ENCODE measurements at regions of chr22 and their contacts with region 1.

Region 1: GRCh38 chr22:45553351-45554039 is 50.8 kb downstream of the FBLN1 start:
- DNase-seq: peak; percentile 90
- H3K4me3 Mint-ChIP-seq: peak overlapping the region; percentile 2
- H3K27ac Mint-ChIP-seq: peak overlapping the region; percentile 99
- H3K4me1 Mint-ChIP-seq: peaks cover 37% of the 10 kb centered on the region
- H3K27me3 Mint-ChIP-seq: no peaks in the 10 kb centered on the region
- CTCF ChIP-seq: peak; percentile 96

Region 2: DNA sequence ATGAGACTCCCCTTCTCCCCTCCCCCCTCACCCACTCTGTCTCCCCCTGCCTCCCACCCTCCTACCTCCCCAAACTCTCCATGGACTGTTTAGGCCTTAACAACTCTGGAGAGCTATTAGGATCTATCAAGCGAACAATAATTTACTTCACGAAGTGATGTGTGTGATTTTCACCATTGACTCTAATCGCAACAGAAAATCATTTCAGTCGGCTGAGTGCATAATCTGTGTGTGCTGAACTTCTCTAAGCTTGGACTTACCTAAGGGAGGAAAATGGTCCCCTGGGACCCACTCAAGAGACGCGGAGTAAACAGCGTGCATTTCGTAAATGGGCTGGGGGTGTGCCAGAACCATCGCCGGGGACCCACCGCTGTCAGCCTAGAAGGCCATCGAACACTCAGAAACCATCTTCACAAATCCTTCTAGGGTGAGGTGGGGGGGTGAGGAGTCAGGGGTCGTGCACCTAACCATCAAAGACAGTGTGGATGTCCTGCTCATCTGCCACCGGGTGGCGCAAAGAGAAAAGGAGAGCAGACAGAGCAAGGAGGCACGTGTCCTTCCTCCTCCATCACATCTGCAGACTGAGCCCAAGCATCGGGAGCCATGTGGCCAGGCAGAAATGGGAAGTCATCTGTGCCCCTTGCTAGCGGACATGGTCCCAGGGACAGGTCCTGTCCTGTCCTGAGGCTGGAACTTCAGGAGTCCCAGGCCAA is 451.8 kb before region 1 on chr22:
- CTCF ChIA-PET with region 1: interaction called, 3 read pairs
- POLR2A ChIA-PET with region 1: no interaction called
- intact Hi-C with region 1: loop called (anchors 5 kb)
- DNase-seq: peak; percentile 83
- H3K4me3 Mint-ChIP-seq: no peak overlapping the region
- H3K27ac Mint-ChIP-seq: no peak overlapping the region
- H3K4me1 Mint-ChIP-seq: peaks cover 10% of the 10 kb centered on the region
- H3K27me3 Mint-ChIP-seq: peaks cover 16% of the 10 kb centered on the region
- CTCF ChIP-seq: peak; percentile 51

Region 3: DNA sequence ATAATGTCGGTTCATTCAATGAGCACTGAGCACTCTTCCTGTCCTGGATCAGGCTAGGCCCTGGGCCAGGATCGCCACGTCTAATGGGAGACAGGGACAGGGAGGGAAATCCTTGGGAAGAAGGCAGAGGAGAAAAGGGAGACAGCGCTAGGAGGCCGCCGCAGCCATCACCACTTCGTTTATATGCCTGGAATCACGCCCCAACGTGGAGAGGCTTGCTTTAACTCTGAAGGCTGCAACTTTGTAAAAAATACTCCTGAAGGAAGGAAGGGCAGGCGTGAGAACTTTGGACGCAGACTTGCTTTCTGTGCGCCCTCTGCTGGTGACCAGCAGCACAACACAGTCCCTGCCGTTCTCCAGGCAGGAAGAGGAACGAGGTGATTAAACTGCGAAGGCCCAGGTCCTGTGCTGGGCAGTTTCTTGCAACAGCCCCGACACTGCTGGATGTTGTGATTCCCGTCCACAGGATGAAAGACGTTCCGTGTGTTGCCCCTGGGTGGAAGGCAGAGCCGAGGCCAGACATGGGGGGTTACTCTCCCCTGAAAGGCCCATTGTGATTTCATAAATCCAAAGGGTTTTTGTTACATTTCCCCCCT is 117.9 kb before region 1 on chr22:
- CTCF ChIA-PET with region 1: interaction called, 142 read pairs
- POLR2A ChIA-PET with region 1: interaction called, 20 read pairs
- intact Hi-C with region 1: no loop called
- DNase-seq: peak; percentile 85
- H3K4me3 Mint-ChIP-seq: no peak overlapping the region
- H3K27ac Mint-ChIP-seq: peak overlapping the region; percentile 39
- H3K4me1 Mint-ChIP-seq: peaks cover 11% of the 10 kb centered on the region
- H3K27me3 Mint-ChIP-seq: no peaks in the 10 kb centered on the region
- CTCF ChIP-seq: peak; percentile 92

Region 4: GRCh38 chr22:45448431-45448830 is 105.1 kb before region 1 on chr22:
- CTCF ChIA-PET with region 1: interaction called, 142 read pairs
- POLR2A ChIA-PET with region 1: interaction called, 8 read pairs
- intact Hi-C with region 1: no loop called
- DNase-seq: no peak
- H3K4me3 Mint-ChIP-seq: no peak overlapping the region
- H3K27ac Mint-ChIP-seq: no peak overlapping the region
- H3K4me1 Mint-ChIP-seq: peaks cover 15% of the 10 kb centered on the region
- H3K27me3 Mint-ChIP-seq: no peaks in the 10 kb centered on the region
- CTCF ChIP-seq: no peak

Region 5: DNA sequence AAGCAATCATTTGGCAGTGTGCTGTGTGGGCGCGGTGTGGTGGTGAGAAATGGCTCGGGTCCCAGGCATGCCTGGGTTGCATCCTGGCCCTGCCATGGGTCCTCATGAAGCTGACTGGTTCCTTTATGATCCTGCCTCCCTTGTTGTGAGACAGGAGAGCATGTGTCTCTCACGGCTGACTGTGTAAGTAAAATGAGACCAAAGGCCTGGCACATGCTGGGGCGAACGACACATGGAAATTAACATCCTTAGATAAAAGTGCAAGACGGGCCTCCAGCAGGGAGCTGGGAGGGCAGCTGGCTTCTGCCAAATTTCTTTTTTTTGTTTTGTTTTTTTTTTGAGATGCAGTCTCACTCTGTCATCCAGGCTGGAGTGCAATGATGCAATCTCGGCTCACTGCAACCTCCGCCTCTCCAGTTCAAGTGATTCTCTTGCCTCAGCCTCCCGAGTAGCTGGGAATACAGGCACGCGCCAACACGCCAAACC is 60.2 kb before region 1 on chr22:
- CTCF ChIA-PET with region 1: no interaction called
- POLR2A ChIA-PET with region 1: no interaction called
- intact Hi-C with region 1: loop called (anchors 1 kb)
- DNase-seq: peak; percentile 45
- H3K4me3 Mint-ChIP-seq: no peak overlapping the region
- H3K27ac Mint-ChIP-seq: peak overlapping the region; percentile 54
- H3K4me1 Mint-ChIP-seq: peaks cover 16% of the 10 kb centered on the region
- H3K27me3 Mint-ChIP-seq: no peaks in the 10 kb centered on the region
- CTCF ChIP-seq: no peak

Region 6: GRCh38 chr22:45526768-45527360 is 26.6 kb before region 1 on chr22:
- CTCF ChIA-PET with region 1: interaction called, 5 read pairs
- POLR2A ChIA-PET with region 1: interaction called, 15 read pairs
- intact Hi-C with region 1: no loop called
- DNase-seq: no peak
- H3K4me3 Mint-ChIP-seq: no peak overlapping the region
- H3K27ac Mint-ChIP-seq: peak overlapping the region; percentile 23
- H3K4me1 Mint-ChIP-seq: peaks cover 7% of the 10 kb centered on the region
- H3K27me3 Mint-ChIP-seq: no peaks in the 10 kb centered on the region
- CTCF ChIP-seq: no peak

Region 7: DNA sequence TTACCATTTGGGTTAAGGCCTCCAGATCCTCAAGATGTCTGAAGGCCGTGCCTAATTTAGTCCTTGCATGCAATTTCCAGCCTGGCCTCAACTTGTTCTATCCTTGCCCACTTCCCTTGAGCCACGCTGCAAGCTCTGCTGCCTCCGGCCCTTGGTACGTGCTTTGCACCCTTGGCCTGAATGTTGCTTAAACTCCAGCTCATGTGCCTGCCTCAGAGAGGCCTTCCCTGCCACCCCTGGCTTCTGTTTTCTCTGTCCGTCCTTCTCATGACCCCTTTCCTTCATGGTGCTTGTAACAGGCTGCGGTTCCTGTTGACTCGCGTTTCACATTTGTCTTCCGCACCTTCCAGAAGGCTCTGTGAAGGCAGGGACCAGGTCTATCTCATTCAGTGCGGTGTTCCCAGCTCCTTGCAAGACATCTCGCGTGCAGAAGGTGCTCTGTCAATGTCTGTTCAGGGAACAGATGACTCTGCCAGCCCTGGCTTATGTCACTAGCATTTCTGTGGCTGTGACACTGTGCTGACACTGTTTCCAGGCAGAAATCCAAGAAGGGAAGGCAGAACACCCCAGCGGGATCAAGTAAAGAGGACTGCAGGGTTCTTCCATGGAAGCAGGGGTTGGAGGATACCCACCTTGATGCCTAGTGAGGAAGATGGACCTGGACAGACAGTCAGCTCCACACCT is 11.0 kb after region 1 on chr22:
- CTCF ChIA-PET with region 1: interaction called, 18 read pairs
- POLR2A ChIA-PET with region 1: no interaction called
- intact Hi-C with region 1: no loop called
- DNase-seq: no peak
- H3K4me3 Mint-ChIP-seq: no peak overlapping the region
- H3K27ac Mint-ChIP-seq: no peak overlapping the region
- H3K4me1 Mint-ChIP-seq: no peaks in the 10 kb centered on the region
- H3K27me3 Mint-ChIP-seq: no peaks in the 10 kb centered on the region
- CTCF ChIP-seq: no peak